ENCODE measurements at regions of chr5 and their contacts with region 1.

Region 1: DNA sequence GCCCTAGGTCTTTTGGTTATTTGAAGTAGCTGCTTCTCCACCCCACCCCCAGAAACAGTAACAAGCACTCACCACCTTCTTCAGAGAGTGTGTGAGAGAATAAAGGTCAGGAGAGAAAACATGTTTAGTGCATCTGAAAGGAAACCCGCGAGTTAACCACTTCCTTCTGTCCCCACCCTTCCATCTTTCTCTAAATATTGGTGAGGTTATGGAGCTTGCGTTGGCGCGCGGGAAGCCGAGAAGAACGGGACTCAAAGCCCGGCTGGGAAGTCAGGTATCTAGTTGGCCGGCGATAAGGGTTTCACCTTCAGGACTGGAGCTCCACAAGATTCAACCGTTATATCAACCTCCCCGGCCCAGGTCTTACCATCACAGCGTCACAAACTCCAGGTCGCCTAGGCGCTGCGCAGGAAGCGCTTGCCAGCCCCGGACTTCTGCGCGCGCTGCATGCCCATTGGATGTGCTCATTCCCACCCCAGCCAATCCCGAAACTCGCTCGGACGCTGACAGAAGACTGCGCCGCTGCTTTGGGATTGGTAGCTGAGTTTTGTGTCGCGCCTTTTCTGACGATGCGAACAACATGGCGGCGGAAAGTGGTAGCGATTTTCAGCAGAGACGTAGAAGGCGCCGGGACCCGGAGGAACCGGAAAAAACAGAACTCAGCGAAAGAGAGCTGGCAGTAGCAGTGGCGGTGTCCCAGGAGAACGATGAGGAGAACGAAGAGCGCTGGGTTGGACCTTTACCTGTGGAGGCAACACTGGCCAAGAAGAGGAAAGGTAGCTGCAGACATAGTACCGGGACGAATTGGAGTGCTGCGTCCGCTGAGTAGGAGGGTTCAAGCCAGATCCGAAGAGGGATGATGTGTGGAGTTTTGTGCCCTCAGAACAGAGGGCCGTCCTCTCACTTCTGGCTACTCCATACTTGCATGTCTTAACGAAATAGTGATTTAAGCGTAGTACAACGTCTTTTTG is at the starts of genes CENPK and PPWD1:
- DNase-seq: peak; percentile 97
- H3K4me3 ChIP-seq: peak within 1 kb of the TSS; percentile 90
- H3K27ac ChIP-seq: peak within 1 kb of the TSS; percentile 80
- H3K4me1 ChIP-seq: peaks cover 29% of the 10 kb centered on the region
- CTCF ChIP-seq: no peak
- total RNA-seq, gene CENPK: 52.6 and 62.4 TPM in 2 replicates
- total RNA-seq, gene PPWD1: 51.5 and 67.6 TPM in 2 replicates

Region 2: DNA sequence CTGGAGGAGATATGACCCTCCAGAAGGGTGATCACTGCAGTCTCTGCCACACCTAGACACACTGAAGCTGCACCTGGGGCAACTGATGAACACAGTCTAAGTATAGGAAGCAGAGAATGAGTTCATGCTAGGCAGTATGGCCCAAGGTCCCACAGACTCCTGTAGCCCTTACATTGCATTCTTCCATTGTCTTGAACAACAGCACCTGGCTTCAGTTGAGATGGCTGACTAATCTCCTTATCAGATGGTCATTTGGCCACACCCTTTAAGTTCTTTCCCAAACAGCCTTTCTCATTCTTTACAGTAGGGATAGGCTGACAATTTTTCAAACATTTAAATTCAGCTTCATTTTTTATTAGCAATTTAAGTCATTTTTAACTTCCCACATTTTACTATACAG is 23.2 kb before region 1 on chr5:
- CTCF ChIA-PET with region 1: no interaction called
- POLR2A ChIA-PET with region 1: no interaction called
- intact Hi-C with region 1: no loop called
- DNase-seq: no peak
- H3K4me3 ChIP-seq: no peak overlapping the region
- H3K27ac ChIP-seq: no peak overlapping the region
- H3K4me1 ChIP-seq: no peaks in the 10 kb centered on the region
- CTCF ChIP-seq: no peak

Region 3: GRCh38 chr5:65577141-65577540 is 14.1 kb after region 1 on chr5:
- CTCF ChIA-PET with region 1: no interaction called
- POLR2A ChIA-PET with region 1: interaction called, 17 read pairs
- intact Hi-C with region 1: no loop called
- DNase-seq: no peak
- H3K4me3 ChIP-seq: no peak overlapping the region
- H3K27ac ChIP-seq: no peak overlapping the region
- H3K4me1 ChIP-seq: no peaks in the 10 kb centered on the region
- CTCF ChIP-seq: no peak

Region 4: DNA sequence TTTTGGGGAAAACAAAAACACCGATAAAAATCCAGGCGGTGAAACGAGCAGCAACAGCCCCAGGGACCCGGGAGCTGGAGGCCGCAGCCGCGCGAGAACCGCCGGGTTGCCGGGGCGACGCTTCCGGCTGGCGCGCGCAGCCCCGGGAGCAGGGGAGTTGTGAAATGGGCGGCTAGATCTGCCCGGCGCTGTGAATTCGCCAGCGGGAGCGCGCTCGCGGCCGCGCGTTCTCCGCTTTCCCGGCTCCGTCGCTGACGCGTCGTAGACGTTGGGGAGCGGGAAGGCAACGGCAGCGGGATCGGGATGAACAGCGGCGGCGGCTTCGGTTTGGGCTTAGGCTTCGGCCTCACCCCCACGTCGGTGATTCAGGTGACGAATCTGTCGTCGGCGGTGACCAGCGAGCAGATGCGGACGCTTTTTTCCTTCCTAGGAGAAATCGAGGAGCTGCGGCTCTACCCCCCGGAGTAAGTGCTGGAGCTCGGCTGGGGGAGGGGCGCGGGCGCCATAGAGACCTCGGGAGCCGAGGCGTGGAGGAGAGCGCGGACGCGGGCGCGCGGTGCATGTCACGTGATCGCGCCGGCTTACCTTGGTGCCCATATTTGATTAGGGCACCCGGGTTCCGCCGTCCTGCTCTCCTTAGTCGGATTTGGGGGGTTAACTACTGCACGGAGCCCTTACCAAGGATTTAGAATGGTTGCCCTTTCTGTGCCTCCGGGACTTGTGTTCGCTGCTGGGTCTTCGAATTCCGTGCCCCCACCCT is 581.2 kb after region 1 on chr5 and contains the start of gene SREK1:
- CTCF ChIA-PET with region 1: no interaction called
- POLR2A ChIA-PET with region 1: interaction called, 3 read pairs
- intact Hi-C with region 1: loop called (anchors 10 kb)
- DNase-seq: peak; percentile 93
- H3K4me3 ChIP-seq: peak within 1 kb of the TSS; percentile 76
- H3K27ac ChIP-seq: peak within 1 kb of the TSS; percentile 82
- H3K4me1 ChIP-seq: peaks cover 21% of the 10 kb centered on the region
- CTCF ChIP-seq: no peak
- total RNA-seq, gene SREK1: 101 and 225 TPM in 2 replicates